B cell (primary cell): ENCODE measurements at regions of chr3 and their contacts with region 1.

Region 1: DNA sequence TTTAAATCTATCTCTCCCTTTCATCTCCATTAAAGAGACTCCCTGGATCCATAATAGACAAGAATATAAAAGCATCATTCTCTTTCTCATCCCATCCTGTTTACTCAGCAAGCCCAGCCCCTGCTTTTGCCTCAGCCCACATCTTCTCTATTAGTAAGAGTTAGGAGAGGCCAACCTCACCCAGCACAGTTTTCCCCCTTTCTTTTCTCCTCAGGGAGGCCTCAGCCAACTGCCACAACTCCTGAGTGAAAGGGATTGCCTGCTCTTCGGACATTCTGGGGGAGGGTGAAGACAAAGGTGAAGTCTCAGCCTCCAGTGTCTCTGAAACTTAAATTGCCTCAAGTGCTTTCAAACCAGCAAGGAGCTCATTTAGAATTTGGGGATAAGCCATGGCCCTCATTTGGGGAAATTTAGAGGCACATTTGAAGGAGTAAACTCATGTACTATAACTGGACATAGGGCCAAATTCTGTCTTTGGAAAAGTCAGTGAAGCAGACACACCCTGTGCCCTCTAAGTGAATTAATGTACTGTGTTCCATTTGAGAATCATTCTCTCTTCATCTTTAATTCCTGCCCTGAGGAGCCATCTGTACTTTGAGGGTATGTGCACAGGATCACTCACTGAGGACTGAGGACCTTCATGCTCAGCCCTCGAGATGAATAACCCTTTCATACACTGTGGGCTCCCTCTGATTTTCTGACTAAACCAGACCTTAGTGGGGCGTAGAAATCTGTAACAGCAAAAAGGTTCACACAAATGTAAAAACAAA is 82.5 kb downstream of the SOX2 start:
- DNase-seq: no peak
- ATAC-seq: no peak
- H3K4me3 ChIP-seq: no peak overlapping the region
- H3K4me3 Mint-ChIP-seq: no peak overlapping the region
- H3K27ac ChIP-seq: no peak overlapping the region
- H3K27ac Mint-ChIP-seq: no peak overlapping the region
- H3K4me1 ChIP-seq: no peaks in the 10 kb centered on the region
- H3K4me1 Mint-ChIP-seq: no peaks in the 10 kb centered on the region
- H3K27me3 ChIP-seq: no peaks in the 10 kb centered on the region
- H3K27me3 Mint-ChIP-seq: no peaks in the 10 kb centered on the region
- CTCF ChIP-seq: no peak

Region 2: GRCh38 chr3:181782301-181782954 is 11.8 kb before region 1 on chr3:
- CTCF ChIA-PET with region 1: no interaction called
- POLR2A ChIA-PET with region 1: interaction called, 12 read pairs
- intact Hi-C with region 1: no loop called
- DNase-seq: no peak
- ATAC-seq: no peak
- H3K4me3 ChIP-seq: no peak overlapping the region
- H3K4me3 Mint-ChIP-seq: no peak overlapping the region
- H3K27ac ChIP-seq: no peak overlapping the region
- H3K27ac Mint-ChIP-seq: no peak overlapping the region
- H3K4me1 ChIP-seq: no peaks in the 10 kb centered on the region
- H3K4me1 Mint-ChIP-seq: no peaks in the 10 kb centered on the region
- H3K27me3 ChIP-seq: no peaks in the 10 kb centered on the region
- H3K27me3 Mint-ChIP-seq: no peaks in the 10 kb centered on the region
- CTCF ChIP-seq: no peak

Region 3: GRCh38 chr3:181823716-181824115 is 29.5 kb after region 1 on chr3:
- CTCF ChIA-PET with region 1: no interaction called
- POLR2A ChIA-PET with region 1: no interaction called
- intact Hi-C with region 1: no loop called
- DNase-seq: no peak
- ATAC-seq: no peak
- H3K4me3 ChIP-seq: no peak overlapping the region
- H3K4me3 Mint-ChIP-seq: no peak overlapping the region
- H3K27ac ChIP-seq: no peak overlapping the region
- H3K27ac Mint-ChIP-seq: no peak overlapping the region
- H3K4me1 ChIP-seq: no peaks in the 10 kb centered on the region
- H3K4me1 Mint-ChIP-seq: no peaks in the 10 kb centered on the region
- H3K27me3 ChIP-seq: no peaks in the 10 kb centered on the region
- H3K27me3 Mint-ChIP-seq: peaks cover 7% of the 10 kb centered on the region
- CTCF ChIP-seq: no peak